ENCODE measurements at regions of chr6 and their contacts with region 1.

Region 1: DNA sequence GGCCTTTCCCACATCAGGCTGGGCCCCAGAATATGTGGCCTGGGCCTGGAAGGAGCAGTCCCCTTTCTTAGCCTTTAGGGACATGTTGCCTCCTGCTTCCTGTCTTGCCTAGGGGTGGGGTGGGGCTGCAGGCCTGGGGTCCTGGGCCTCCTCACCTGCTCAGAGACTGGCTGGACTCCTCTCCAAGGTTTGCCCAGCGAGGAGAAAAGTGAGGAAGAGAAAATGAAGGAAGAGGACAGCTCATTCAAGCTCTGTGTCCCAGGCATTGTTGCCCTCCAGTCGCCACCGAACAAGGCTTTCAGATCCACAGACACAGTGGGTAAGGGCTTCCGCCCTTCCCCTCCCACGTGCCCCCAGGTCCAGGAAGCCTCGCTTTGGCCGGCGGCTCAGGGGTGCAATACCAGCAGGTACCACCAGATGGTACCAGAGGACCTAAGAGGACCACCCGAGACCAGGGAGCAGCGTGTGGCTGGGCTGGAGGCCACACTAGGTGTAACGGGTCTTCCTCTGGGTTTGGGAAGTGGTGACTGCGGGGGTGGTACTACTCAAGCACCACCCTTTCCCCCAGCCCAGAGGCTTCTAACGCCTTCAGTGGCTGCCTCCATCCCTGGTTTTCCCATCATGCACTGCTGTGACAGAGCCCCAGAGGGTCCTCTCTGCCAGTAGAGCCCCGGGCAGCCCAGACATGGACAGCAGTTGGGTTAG is 5.5 kb upstream of the BAK1 start:
- DNase-seq: peak; percentile 64 to 70
- ATAC-seq: peak; percentile 54 to 75
- H3K4me3 ChIP-seq: no peak overlapping the region
- H3K27ac ChIP-seq: peak overlapping the region; percentile 60 to 78; a peak in 5 of 6 replicates
- H3K4me1 ChIP-seq: peaks cover 25% of the 10 kb centered on the region
- CTCF ChIP-seq: peak; percentile 78
- EP300 ChIP-seq: no peak
- POLR2A ChIP-seq: no peak
- RAD21 ChIP-seq: peak; percentile 87 to 88

Region 2: DNA sequence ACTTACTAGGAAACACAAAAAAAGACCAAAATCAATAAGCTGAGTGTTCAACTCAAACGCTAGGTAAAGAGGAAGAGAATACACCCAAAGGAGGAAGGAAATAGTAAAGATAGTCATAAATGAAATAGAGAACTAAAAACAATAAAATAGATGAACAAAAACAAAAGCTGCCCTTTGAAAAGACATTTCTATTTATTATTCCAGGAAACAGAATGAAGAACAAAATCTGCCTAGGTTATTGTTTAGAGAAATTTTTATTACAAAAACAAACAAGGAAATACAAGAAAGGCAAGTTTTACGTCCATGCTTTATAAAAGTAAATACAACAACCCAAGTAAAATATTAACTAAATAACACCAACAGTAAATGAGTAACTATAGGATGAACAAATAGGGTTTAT is 664.8 kb before region 1 on chr6:
- CTCF ChIA-PET with region 1: no interaction called
- POLR2A ChIA-PET with region 1: no interaction called
- DNase-seq: peak in 1 of 2 experiments; percentile 22
- ATAC-seq: peak in 1 of 2 experiments; percentile 50; a peak in 1 of 6 replicates
- H3K4me3 ChIP-seq: peak overlapping the region; percentile 16; the same call in 1 of the 3 replicates
- H3K27ac ChIP-seq: peak overlapping the region in 1 of 2 experiments; percentile 73; a peak in 3 of 6 replicates
- H3K4me1 ChIP-seq: peaks cover 28% of the 10 kb centered on the region
- CTCF ChIP-seq: no peak
- EP300 ChIP-seq: no peak
- POLR2A ChIP-seq: no peak
- RAD21 ChIP-seq: no peak

Region 3: GRCh38 chr6:33607784-33608161 is 22.2 kb after region 1 on chr6:
- CTCF ChIA-PET with region 1: interaction called, 20 read pairs
- POLR2A ChIA-PET with region 1: no interaction called
- DNase-seq: peak; percentile 21 to 51
- ATAC-seq: peak in 1 of 2 experiments; percentile 31; a peak in 1 of 6 replicates
- H3K4me3 ChIP-seq: no peak overlapping the region
- H3K27ac ChIP-seq: peak overlapping the region; percentile 54 to 88; a peak in 5 of 6 replicates
- H3K4me1 ChIP-seq: peaks cover 68% of the 10 kb centered on the region
- CTCF ChIP-seq: peak; percentile 34; the same call in 2 of the 3 replicates
- EP300 ChIP-seq: no peak
- POLR2A ChIP-seq: no peak
- RAD21 ChIP-seq: peak; percentile 43 to 57; a peak in 3 of 5 replicates

Region 4: GRCh38 chr6:33620856-33621710 is 35.5 kb after region 1 on chr6 and contains the start of gene ITPR3:
- CTCF ChIA-PET with region 1: interaction called, 18 read pairs
- POLR2A ChIA-PET with region 1: interaction called, 8 read pairs
- DNase-seq: peak; percentile 66 to 72
- ATAC-seq: peak; percentile 71 to 76
- H3K4me3 ChIP-seq: peak within 1 kb of the TSS; percentile 80
- H3K27ac ChIP-seq: peak within 1 kb of the TSS; percentile 87 to 99
- H3K4me1 ChIP-seq: peaks cover 30% of the 10 kb centered on the region
- CTCF ChIP-seq: no peak
- EP300 ChIP-seq: no peak
- POLR2A ChIP-seq: no peak; the same call in 1 of the 2 replicates
- RAD21 ChIP-seq: no peak
- polyA plus RNA-seq, gene ITPR3: 17.6 and 19.1 TPM in 2 replicates

Region 5: DNA sequence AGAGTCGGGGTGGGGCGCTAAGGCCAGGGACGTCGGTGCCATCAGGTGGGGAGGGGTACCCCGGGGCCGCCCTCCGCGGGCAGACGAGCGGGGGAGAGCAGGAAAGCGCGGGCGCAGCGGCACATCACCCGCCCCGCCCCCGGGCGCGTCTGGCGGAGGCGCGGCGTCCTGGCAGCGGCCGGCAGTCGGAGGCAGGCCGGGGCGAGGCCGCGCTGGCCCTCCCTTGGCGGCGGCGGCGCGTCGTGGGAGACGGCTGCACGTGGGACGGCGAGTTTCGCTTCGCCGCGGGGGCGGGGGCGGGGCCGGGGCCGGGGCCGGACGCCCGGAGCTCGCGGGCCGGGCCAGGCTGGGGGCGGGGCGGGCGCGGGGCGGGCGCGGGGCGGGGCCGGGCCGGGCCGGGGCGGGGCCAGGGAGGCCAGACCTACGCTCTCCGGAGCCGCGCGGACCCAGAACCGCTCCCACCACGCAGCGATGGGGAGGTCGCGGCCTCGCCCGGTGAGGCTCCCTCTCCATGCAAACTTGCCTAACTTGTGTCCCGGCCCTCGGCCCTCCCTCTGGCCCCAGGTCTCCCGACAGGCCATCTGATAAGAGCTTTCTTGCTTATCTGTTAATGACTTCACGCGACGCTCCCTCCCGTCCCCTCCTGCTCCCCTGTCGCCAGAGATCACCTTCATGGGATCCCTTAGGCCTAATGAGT is 48.1 kb after region 1 on chr6:
- CTCF ChIA-PET with region 1: interaction called, 17 read pairs
- POLR2A ChIA-PET with region 1: no interaction called
- DNase-seq: peak; percentile 33 to 35
- ATAC-seq: peak; percentile 83 to 88
- H3K4me3 ChIP-seq: peak overlapping the region; percentile 46
- H3K27ac ChIP-seq: peak overlapping the region; percentile 54 to 92
- H3K4me1 ChIP-seq: peaks cover 33% of the 10 kb centered on the region
- CTCF ChIP-seq: no peak
- EP300 ChIP-seq: no peak
- POLR2A ChIP-seq: no peak
- RAD21 ChIP-seq: no peak

Region 6: DNA sequence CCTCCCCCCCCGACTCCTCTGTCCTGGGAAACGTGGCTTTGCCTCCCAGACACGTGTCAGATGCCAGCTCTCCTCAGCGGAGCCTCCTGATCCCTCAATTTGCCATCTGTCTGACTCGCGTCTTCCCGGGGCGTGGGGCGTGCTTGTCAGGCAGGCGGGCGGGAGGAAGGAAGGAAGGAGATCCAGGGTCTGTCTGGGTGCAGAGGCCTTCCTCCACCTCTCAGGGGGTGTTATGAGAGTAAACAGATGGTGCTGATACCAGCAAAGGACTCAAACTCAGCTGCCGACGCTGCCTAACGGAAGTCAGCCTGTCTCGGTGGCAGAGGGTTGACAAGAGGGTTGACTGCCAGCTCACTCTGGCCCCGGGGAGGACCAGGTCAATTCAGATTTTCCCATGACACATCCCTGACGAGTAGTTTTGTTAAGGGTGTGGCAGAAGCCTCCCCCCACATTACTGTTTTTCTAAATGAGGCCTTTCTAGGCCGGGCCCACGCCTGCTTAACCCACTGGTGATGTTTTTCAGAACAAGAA is 108.9 kb after region 1 on chr6:
- CTCF ChIA-PET with region 1: interaction called, 15 read pairs
- POLR2A ChIA-PET with region 1: no interaction called
- DNase-seq: peak in 1 of 2 experiments; percentile 33
- ATAC-seq: peak in 1 of 2 experiments; percentile 7; a peak in 2 of 6 replicates
- H3K4me3 ChIP-seq: no peak overlapping the region
- H3K27ac ChIP-seq: peak overlapping the region; percentile 14 to 73; a peak in 3 of 6 replicates
- H3K4me1 ChIP-seq: peaks cover 29% of the 10 kb centered on the region
- CTCF ChIP-seq: no peak
- EP300 ChIP-seq: no peak
- POLR2A ChIP-seq: no peak
- RAD21 ChIP-seq: no peak

Region 7: DNA sequence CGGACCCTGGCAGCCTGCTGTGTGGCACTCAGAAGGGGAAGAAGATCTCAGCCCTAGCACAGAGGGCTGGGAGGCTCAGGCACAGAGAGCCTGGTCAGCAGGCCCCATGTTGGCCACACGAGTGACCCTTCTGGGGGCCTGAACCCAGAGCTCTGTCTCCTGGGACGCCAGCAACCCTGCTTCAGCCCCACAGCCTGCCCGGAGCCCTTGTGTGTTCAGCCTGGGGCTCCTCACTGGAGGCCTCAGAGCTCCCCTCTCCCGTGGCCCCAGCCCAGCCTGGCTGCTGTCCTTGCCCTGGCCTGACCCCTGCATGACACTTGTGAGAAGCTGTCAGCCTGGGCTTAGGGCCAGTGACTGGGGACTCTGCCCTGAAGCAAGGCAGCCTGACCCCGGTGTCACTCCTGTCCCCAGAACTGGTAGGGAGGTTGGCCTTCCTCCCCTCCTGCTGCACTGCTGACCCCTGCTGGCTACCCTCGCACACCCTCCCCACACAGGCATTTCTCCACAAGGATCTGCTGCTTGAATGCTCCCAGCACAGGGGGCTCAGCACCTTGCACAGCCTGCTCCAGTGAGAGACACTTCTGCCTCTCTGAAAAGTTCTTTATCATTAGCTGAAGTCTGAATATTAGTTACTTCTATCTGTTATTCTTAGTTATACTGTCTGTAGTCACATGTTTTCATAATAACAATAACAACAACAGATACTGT is 176.5 kb after region 1 on chr6:
- CTCF ChIA-PET with region 1: interaction called, 19 read pairs
- POLR2A ChIA-PET with region 1: no interaction called
- DNase-seq: peak; percentile 40 to 59
- ATAC-seq: peak; percentile 86 to 93
- H3K4me3 ChIP-seq: no peak overlapping the region
- H3K27ac ChIP-seq: peak overlapping the region; percentile 63 to 65; a peak in 4 of 6 replicates
- H3K4me1 ChIP-seq: peaks cover 27% of the 10 kb centered on the region
- CTCF ChIP-seq: peak; percentile 64
- EP300 ChIP-seq: no peak
- POLR2A ChIP-seq: no peak
- RAD21 ChIP-seq: peak; percentile 69 to 77

Region 8: DNA sequence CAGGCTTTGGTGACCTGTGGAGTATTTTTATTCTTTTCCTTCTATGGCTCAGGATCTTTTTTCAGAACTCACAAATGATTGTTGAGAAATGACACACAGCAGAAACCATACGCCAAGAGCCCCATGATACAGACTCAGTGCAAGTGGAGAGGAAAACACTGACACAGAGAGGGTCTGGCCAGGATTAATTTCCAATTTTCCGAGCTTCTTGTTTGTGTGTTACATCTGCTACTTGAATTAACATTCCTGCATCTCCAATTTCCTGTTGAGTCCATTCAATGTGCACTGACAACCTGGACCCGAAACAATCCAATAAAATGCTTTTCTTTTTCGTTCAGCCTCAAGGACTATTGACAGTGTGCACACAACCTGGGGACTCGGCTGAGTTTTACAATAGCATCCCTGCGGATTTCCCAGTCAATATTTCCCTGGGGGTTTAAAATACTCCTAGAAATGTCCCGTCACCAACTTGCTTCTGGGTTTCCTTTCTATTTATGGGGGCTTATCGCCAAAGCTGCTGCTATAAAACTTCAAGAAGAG is 223.2 kb after region 1 on chr6:
- CTCF ChIA-PET with region 1: no interaction called
- POLR2A ChIA-PET with region 1: no interaction called
- DNase-seq: no peak
- ATAC-seq: no peak
- H3K4me3 ChIP-seq: no peak overlapping the region
- H3K27ac ChIP-seq: no peak overlapping the region
- H3K4me1 ChIP-seq: no peaks in the 10 kb centered on the region
- CTCF ChIP-seq: no peak
- EP300 ChIP-seq: no peak
- POLR2A ChIP-seq: no peak
- RAD21 ChIP-seq: no peak